Endothelial cell of umbilical vein (primary cell): ENCODE measurements at regions of chr19 and their contacts with region 1.

Region 1: DNA sequence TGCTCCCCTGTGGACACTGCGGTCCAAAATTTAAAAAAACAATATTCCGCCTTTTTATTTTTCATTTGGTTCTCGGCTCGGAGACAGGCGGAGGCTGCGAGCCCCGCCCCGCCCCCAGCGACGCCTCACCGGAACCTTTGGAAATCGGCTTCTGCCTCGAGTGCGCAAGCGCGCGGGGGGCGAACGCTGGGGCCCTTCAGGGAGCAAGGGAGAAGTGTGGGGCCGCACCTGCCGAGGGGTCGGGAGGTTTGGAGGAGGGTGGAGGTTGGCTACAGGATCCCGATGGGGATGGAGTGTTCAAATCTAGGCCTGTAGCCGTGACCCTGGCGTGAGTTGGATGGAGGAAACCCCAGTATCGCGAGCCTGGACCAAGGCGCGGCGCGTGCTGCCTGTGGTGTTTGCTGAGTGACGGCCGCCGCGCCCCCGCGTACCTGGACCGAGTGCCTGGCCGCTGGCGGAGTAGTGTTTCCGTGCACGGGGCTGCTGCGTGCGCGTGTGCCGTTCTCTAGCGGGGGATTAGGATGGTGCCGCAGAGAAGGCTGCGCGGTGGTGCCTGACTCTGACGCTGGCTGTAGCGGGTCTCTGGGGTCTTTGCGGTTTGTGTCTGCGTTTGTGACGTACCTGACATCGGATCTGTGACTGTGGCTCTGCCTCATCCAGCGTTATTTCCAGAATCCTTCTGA is 565 bp upstream of the ZFP30 start:
- DNase-seq: peak; percentile 88
- H3K4me3 ChIP-seq: peak overlapping the region; percentile 65 to 92 (median 91)
- H3K27ac ChIP-seq: peak overlapping the region; percentile 26
- H3K4me1 ChIP-seq: peaks cover 14% of the 10 kb centered on the region
- H3K27me3 ChIP-seq: no peaks in the 10 kb centered on the region
- CTCF ChIP-seq: no peak
- POLR2A ChIP-seq: peak; percentile 18

Region 2: GRCh38 chr19:37309834-37310575 is 345.8 kb before region 1 on chr19:
- CTCF ChIA-PET with region 1: no interaction called
- POLR2A ChIA-PET with region 1: no interaction called
- dilution Hi-C with region 1: no loop called
- intact Hi-C with region 1: loop called (anchors 10 kb)
- DNase-seq: no peak
- H3K4me3 ChIP-seq: no peak overlapping the region
- H3K27ac ChIP-seq: no peak overlapping the region
- H3K4me1 ChIP-seq: no peaks in the 10 kb centered on the region
- H3K27me3 ChIP-seq: no peaks in the 10 kb centered on the region
- CTCF ChIP-seq: no peak
- POLR2A ChIP-seq: no peak

Region 3: DNA sequence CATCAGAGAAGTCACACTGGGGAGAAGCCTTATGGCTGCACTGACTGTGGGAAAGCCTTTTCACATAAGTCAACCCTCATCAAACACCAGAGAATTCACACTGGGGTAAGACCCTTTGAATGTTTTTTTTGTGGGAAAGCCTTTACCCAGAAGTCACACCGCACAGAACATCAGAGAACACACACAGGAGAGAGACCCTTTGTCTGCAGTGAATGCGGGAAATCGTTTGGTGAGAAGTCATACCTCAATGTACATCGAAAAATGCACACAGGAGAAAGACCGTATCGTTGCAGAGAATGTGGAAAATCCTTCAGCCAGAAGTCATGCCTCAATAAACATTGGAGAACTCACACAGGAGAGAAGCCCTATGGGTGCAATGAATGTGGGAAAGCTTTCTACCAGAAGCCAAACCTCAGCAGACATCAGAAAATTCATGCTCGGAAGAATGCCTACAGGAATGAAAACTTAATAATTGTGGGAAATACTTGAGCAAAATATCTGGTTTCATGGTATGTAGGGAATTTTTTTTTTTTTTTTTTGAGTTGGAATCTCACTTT is 118.4 kb before region 1 on chr19:
- CTCF ChIA-PET with region 1: no interaction called
- POLR2A ChIA-PET with region 1: no interaction called
- dilution Hi-C with region 1: no loop called
- intact Hi-C with region 1: no loop called
- DNase-seq: no peak
- H3K4me3 ChIP-seq: no peak overlapping the region
- H3K27ac ChIP-seq: no peak overlapping the region
- H3K4me1 ChIP-seq: no peaks in the 10 kb centered on the region
- H3K27me3 ChIP-seq: no peaks in the 10 kb centered on the region
- CTCF ChIP-seq: no peak
- POLR2A ChIP-seq: no peak

Region 4: GRCh38 chr19:37594304-37594981 is 61.4 kb before region 1 on chr19 and contains the starts of genes ZNF540 and ZNF571:
- CTCF ChIA-PET with region 1: no interaction called
- POLR2A ChIA-PET with region 1: no interaction called
- dilution Hi-C with region 1: no loop called
- intact Hi-C with region 1: loop called (anchors 1 kb)
- DNase-seq: peak; percentile 94
- H3K4me3 ChIP-seq: peak within 1 kb of the TSS; percentile 65 to 81 (median 73)
- H3K27ac ChIP-seq: no peak within 1 kb of the TSS
- H3K4me1 ChIP-seq: peaks cover 10% of the 10 kb centered on the region
- H3K27me3 ChIP-seq: no peaks in the 10 kb centered on the region
- CTCF ChIP-seq: no peak
- POLR2A ChIP-seq: peak; percentile 17
- total RNA-seq, gene ZNF540: 0.75 and 0.83 TPM in 2 replicates
- total RNA-seq, gene ZNF571: 2.0 and 2.1 TPM in 2 replicates

Region 5: GRCh38 chr19:37719111-37719926 is 63.5 kb after region 1 on chr19 and contains the start of gene ZNF607:
- CTCF ChIA-PET with region 1: no interaction called
- POLR2A ChIA-PET with region 1: no interaction called
- dilution Hi-C with region 1: no loop called
- intact Hi-C with region 1: loop called (anchors 1 kb)
- DNase-seq: peak; percentile 91
- H3K4me3 ChIP-seq: peak within 1 kb of the TSS; percentile 68 to 92 (median 74)
- H3K27ac ChIP-seq: no peak within 1 kb of the TSS
- H3K4me1 ChIP-seq: peaks cover 7% of the 10 kb centered on the region
- H3K27me3 ChIP-seq: no peaks in the 10 kb centered on the region
- CTCF ChIP-seq: peak; percentile 48 to 72
- POLR2A ChIP-seq: peak; percentile 58
- total RNA-seq, gene ZNF607: 4.5 and 5.2 TPM in 2 replicates